Naive thymus-derived CD4-positive, alpha-beta T cell (primary cell): ENCODE measurements at regions of chr7 and their contacts with region 1.

Region 1: DNA sequence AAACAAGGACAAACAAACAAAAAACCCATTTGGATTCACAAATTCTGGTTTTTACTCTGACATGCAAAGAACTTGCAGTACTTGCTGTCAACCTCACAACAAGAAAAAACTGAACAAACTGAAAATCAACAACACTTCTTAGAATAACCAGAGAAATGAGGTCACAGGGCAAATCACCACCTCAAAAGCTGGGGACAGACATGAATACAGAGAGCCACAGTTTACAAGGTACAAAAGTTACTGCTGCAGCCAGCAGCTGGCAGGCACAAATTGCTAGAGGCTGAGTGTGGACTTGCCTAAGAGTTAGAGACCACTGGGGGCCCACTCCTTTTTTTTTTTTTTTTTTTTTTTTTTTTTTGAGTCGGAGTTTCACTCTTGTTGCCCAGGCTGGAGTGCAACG is 15.0 kb upstream of the RNF32 start:
- DNase-seq: no peak
- ATAC-seq: no peak
- H3K4me3 ChIP-seq: no peak overlapping the region
- H3K4me3 Mint-ChIP-seq: peak overlapping the region in 1 of 10 donors; percentile 83
- H3K27ac ChIP-seq: no peak overlapping the region
- H3K27ac Mint-ChIP-seq: peak overlapping the region in 1 of 9 donors; percentile 86
- H3K4me1 ChIP-seq: no peaks in the 10 kb centered on the region
- H3K4me1 Mint-ChIP-seq: peaks cover 0 to 31% (median 0%) of the 10 kb centered on the region in 7 donors
- H3K27me3 ChIP-seq: no peaks in the 10 kb centered on the region
- H3K27me3 Mint-ChIP-seq: peaks cover 7 to 33% (median 12%) of the 10 kb centered on the region in 5 donors

Region 2: DNA sequence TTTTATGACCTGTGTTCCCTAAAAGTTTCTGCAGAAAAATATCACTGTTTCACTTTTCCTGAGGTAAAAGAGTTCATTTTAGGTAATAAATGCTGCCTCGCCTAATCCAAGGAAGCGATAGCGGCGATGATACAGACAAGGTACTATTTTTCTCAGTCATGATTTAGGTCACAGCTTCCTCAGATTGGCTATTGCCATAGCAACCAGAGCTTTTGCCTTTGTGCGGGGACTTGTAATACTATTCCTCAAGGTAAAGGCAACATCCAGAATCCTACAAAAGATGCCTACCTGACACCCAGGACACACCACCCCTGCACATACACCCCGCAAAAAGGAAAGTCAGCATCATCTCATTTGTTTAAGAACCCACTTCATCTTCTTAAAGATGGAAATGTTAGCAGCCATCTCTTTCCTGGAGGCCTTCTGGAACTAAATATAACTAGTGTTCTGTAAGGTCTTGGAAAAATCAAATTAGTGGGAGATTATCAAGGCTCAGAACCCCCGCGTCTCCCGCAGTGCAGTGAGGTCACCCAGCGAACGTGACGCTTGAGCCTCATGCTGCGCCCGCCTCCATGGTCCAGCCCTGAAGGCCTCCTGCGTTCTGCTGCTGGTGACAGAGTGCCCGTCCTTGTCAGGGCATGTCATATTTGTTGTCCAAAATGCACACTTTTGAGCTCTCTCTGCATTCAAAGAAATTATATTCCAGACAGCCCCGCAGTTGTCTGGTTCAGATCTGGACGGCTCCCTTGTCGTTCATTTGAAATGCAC is 387.0 kb before region 1 on chr7:
- CTCF ChIA-PET with region 1: no interaction called
- POLR2A ChIA-PET with region 1: no interaction called
- intact Hi-C with region 1: no loop called
- DNase-seq: no peak
- ATAC-seq: no peak
- H3K4me3 ChIP-seq: no peak overlapping the region
- H3K4me3 Mint-ChIP-seq: no peak overlapping the region
- H3K27ac ChIP-seq: no peak overlapping the region
- H3K27ac Mint-ChIP-seq: no peak overlapping the region
- H3K4me1 ChIP-seq: no peaks in the 10 kb centered on the region
- H3K4me1 Mint-ChIP-seq: peaks cover 0 to 8% (median 0%) of the 10 kb centered on the region in 7 donors
- H3K27me3 ChIP-seq: no peaks in the 10 kb centered on the region
- H3K27me3 Mint-ChIP-seq: peaks cover 0 to 6% (median 3%) of the 10 kb centered on the region in 5 donors

Region 3: GRCh38 chr7:156612930-156613329 is 12.7 kb before region 1 on chr7:
- CTCF ChIA-PET with region 1: no interaction called
- POLR2A ChIA-PET with region 1: no interaction called
- intact Hi-C with region 1: loop called in 1 of 2 experiments (anchors 1 kb)
- DNase-seq: peak in 8 of 9 donors; percentile 50 to 83 (median 74)
- ATAC-seq: peak; percentile 94
- H3K4me3 ChIP-seq: no peak overlapping the region
- H3K4me3 Mint-ChIP-seq: peak overlapping the region in 9 of 10 donors; percentile 3 to 77 (median 40)
- H3K27ac ChIP-seq: no peak overlapping the region
- H3K27ac Mint-ChIP-seq: peak overlapping the region in 6 of 9 donors; percentile 12 to 76 (median 38)
- H3K4me1 ChIP-seq: peaks cover 14 to 22% of the 10 kb centered on the region in 2 donors
- H3K4me1 Mint-ChIP-seq: peaks cover 17 to 55% (median 41%) of the 10 kb centered on the region in 7 donors
- H3K27me3 ChIP-seq: peaks cover 0 to 4% of the 10 kb centered on the region in 2 donors
- H3K27me3 Mint-ChIP-seq: peaks cover 38 to 72% (median 47%) of the 10 kb centered on the region in 5 donors